H1 (cell line): ENCODE measurements at regions of chr12 and their contacts with region 1.

Region 1: GRCh38 chr12:95998611-95999286 is 2.6 kb upstream of the HAL start:
- DNase-seq: peak in 1 of 2 experiments; percentile 29
- H3K4me3 ChIP-seq: no peak overlapping the region
- H3K27ac ChIP-seq: no peak overlapping the region
- H3K4me1 ChIP-seq: peaks cover 0 to 3% (median 0%) of the 10 kb centered on the region in 4 experiments; a peak in 1 of 7 replicates
- H3K27me3 ChIP-seq: no peaks in the 10 kb centered on the region
- CTCF ChIP-seq: peak; percentile 37 to 87 (median 84)
- EP300 ChIP-seq: no peak
- POLR2A ChIP-seq: no peak
- RAD21 ChIP-seq: peak; percentile 81 to 89

Region 2: GRCh38 chr12:95918194-95918993 is 80.4 kb before region 1 on chr12:
- CTCF ChIA-PET with region 1: interaction called, 145 read pairs
- POLR2A ChIA-PET with region 1: interaction called, 8 read pairs
- DNase-seq: peak in 1 of 2 experiments; percentile 52
- H3K4me3 ChIP-seq: no peak overlapping the region
- H3K27ac ChIP-seq: no peak overlapping the region
- H3K4me1 ChIP-seq: no peaks in the 10 kb centered on the region
- H3K27me3 ChIP-seq: no peaks in the 10 kb centered on the region
- CTCF ChIP-seq: peak; percentile 59 to 98 (median 87)
- EP300 ChIP-seq: no peak
- POLR2A ChIP-seq: no peak
- RAD21 ChIP-seq: peak; percentile 92 to 94

Region 3: DNA sequence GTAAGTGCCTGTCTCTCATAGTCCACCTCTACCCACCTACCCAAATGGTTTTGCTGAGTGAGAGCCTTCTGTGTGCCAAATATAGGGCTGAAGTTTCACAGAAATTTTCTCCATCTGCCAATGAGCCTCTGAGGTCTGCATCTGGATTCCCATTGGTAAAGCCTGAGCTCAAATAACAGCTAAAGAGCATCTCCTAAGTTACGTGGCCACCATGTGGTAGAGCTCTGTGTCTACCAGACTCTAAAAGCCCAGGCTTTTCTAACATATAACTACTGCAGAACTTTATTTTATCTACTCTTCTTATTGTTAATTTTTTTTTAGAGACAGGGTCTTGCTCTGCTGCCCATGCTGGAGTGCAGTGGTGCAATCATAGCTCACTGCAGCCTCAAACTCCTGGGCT is 39.6 kb before region 1 on chr12:
- CTCF ChIA-PET with region 1: interaction called, 149 read pairs
- POLR2A ChIA-PET with region 1: no interaction called
- DNase-seq: no peak
- H3K4me3 ChIP-seq: no peak overlapping the region
- H3K27ac ChIP-seq: no peak overlapping the region
- H3K4me1 ChIP-seq: peaks cover 2 to 5% (median 2%) of the 10 kb centered on the region in 4 experiments; a peak in 4 of 7 replicates
- H3K27me3 ChIP-seq: no peaks in the 10 kb centered on the region
- CTCF ChIP-seq: peak in 2 of 3 experiments; percentile 38 to 41; a peak in 3 of 4 replicates
- EP300 ChIP-seq: no peak
- POLR2A ChIP-seq: no peak
- RAD21 ChIP-seq: peak; percentile 58 to 68

Region 4: DNA sequence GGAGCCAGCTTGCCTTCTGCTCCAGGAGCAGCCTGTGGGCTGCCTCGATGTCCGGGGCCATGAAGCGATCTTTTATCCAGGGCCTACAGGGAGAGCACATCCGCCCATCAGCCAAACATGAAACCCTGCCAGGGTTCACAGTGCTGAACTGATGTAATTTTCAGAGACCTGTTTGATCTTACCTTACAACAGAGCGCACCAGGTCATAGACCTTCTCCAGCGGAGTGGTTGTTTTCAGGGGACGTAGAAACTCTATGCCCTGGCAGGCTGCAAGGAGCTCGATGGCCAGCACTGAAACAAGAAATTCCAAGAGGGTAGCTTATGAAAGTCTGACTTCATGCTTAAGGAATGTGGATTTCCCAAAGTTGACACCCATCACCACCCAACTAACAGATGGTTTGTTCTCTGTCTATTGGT is 22.3 kb before region 1 on chr12:
- CTCF ChIA-PET with region 1: interaction called, 69 read pairs
- POLR2A ChIA-PET with region 1: interaction called, 3 read pairs
- DNase-seq: no peak
- H3K4me3 ChIP-seq: no peak overlapping the region
- H3K27ac ChIP-seq: no peak overlapping the region
- H3K4me1 ChIP-seq: peaks cover 0 to 3% (median under 1%) of the 10 kb centered on the region in 4 experiments; a peak in 5 of 7 replicates
- H3K27me3 ChIP-seq: no peaks in the 10 kb centered on the region
- CTCF ChIP-seq: no peak
- EP300 ChIP-seq: no peak
- POLR2A ChIP-seq: no peak
- RAD21 ChIP-seq: no peak

Region 5: DNA sequence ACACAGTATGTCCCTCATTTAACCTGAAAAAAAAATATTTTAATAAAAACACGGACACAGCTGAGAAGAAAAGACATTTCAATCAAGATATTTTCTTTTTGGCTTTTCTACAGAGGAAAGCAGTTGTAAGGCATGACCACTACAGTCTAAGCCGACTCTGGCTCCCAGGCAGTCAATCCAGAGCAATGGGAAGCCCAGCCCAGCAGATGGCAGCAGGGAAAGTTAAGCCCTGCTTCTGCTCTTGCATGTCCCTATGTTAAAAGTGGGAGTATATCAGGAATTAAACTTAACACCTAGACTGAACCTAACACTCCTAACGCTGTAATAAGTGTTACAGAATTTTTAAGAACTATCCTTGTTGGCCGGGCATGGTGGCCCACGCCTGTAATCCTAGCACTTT is 16.9 kb after region 1 on chr12:
- CTCF ChIA-PET with region 1: interaction called, 16 read pairs
- POLR2A ChIA-PET with region 1: no interaction called
- DNase-seq: no peak
- H3K4me3 ChIP-seq: no peak overlapping the region
- H3K27ac ChIP-seq: no peak overlapping the region
- H3K4me1 ChIP-seq: no peaks in the 10 kb centered on the region
- H3K27me3 ChIP-seq: peaks cover 0 to 1% (median 0%) of the 10 kb centered on the region in 4 experiments; a peak in 1 of 7 replicates
- CTCF ChIP-seq: peak; percentile 42 to 52 (median 50)
- EP300 ChIP-seq: no peak
- POLR2A ChIP-seq: no peak
- RAD21 ChIP-seq: peak; percentile 28 to 45; a peak in 3 of 4 replicates

Region 6: GRCh38 chr12:96044017-96044942 is 45.5 kb after region 1 on chr12:
- CTCF ChIA-PET with region 1: no interaction called
- POLR2A ChIA-PET with region 1: no interaction called
- DNase-seq: no peak
- H3K4me3 ChIP-seq: no peak overlapping the region
- H3K27ac ChIP-seq: no peak overlapping the region
- H3K4me1 ChIP-seq: no peaks in the 10 kb centered on the region
- H3K27me3 ChIP-seq: no peaks in the 10 kb centered on the region
- CTCF ChIP-seq: no peak
- EP300 ChIP-seq: no peak
- POLR2A ChIP-seq: no peak
- RAD21 ChIP-seq: no peak